Activated naive CD4-positive, alpha-beta T cell treated with anti-CD3 and anti-CD28 coated beads for 36 hours (primary cell): ENCODE measurements at regions of chr6 and their contacts with region 1.

Region 1: GRCh38 chr6:13711733-13712598 is at the start of gene RANBP9:
- DNase-seq: peak; percentile 86
- H3K4me3 Mint-ChIP-seq: peak within 1 kb of the TSS; percentile 87
- H3K27ac Mint-ChIP-seq: peak within 1 kb of the TSS; percentile 96
- H3K4me1 Mint-ChIP-seq: peaks cover 54% of the 10 kb centered on the region
- H3K27me3 Mint-ChIP-seq: no peaks in the 10 kb centered on the region
- total RNA-seq, gene RANBP9: 61.2 to 62.9 TPM

Region 2: DNA sequence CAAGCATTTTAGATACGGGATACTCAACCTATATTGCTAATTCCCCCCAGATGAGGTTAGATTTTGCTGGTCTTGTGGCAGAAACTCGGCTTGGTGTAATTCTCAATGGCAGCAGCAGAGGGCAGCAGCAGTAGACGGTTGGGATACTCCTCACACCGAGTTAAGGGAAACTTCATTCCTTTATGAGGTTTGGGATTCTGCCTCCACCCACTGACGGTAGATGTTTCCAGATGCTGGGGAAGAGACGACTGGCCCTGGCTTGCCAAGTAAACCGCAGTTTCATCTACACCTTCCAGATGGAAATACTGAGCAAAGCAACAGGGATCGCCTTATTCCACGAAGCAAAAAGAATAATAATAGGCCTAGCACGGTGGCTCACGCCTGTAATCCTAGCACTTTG is 375.4 kb before region 1 on chr6:
- CTCF ChIA-PET with region 1: no interaction called
- intact Hi-C with region 1: loop called (anchors 5 kb)
- DNase-seq: peak; percentile 82
- H3K4me3 Mint-ChIP-seq: no peak overlapping the region
- H3K27ac Mint-ChIP-seq: no peak overlapping the region
- H3K4me1 Mint-ChIP-seq: peaks cover 8% of the 10 kb centered on the region
- H3K27me3 Mint-ChIP-seq: no peaks in the 10 kb centered on the region

Region 3: GRCh38 chr6:13614926-13615798 is 96.8 kb before region 1 on chr6 and contains the start of gene NOL7:
- CTCF ChIA-PET with region 1: interaction called, 13 read pairs
- intact Hi-C with region 1: loop called (anchors 1 kb)
- DNase-seq: peak; percentile 99
- H3K4me3 Mint-ChIP-seq: peak within 1 kb of the TSS; percentile 99
- H3K27ac Mint-ChIP-seq: peak within 1 kb of the TSS; percentile 93
- H3K4me1 Mint-ChIP-seq: peaks cover 51% of the 10 kb centered on the region
- H3K27me3 Mint-ChIP-seq: no peaks in the 10 kb centered on the region
- total RNA-seq, gene NOL7: 79.5 to 80.8 TPM

Region 4: DNA sequence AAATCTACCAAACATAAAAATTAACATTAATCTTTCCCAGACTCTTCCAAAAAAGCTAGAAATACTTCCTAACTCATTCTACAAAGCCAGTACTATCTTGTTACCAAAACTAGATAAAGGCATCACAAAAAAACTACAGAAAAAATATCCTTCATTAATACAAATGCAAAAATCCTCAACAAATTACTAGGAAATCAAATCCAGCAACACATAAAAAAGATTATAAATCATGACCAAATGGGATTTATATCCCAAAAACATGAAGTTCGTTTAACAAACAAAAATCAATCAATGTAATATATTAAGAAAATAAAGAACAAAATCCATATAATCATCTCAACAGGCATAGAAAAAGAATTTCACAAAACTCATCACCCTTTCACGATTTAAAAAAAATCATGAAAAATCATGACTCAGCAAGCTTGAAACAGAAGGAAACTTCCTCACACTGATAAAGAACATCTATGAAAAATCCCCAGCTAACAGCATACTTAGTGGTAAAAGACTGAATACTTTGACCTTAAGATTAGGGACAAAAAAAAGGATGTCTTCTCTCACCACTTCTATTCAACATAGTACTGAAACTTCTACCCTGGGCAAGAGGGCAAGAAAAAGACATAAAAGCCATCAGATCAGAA is 43.6 kb before region 1 on chr6:
- CTCF ChIA-PET with region 1: no interaction called
- intact Hi-C with region 1: loop called (anchors 5 kb)
- DNase-seq: no peak
- H3K4me3 Mint-ChIP-seq: peak overlapping the region; percentile 5
- H3K27ac Mint-ChIP-seq: peak overlapping the region; percentile 86
- H3K4me1 Mint-ChIP-seq: peaks cover 90% of the 10 kb centered on the region
- H3K27me3 Mint-ChIP-seq: no peaks in the 10 kb centered on the region

Region 5: GRCh38 chr6:13725570-13725969 is 13.6 kb after region 1 on chr6:
- CTCF ChIA-PET with region 1: interaction called, 3 read pairs
- intact Hi-C with region 1: loop called (anchors 1 kb)
- DNase-seq: peak; percentile 62
- H3K4me3 Mint-ChIP-seq: no peak overlapping the region
- H3K27ac Mint-ChIP-seq: peak overlapping the region; percentile 80
- H3K4me1 Mint-ChIP-seq: peaks cover 38% of the 10 kb centered on the region
- H3K27me3 Mint-ChIP-seq: no peaks in the 10 kb centered on the region

Region 6: DNA sequence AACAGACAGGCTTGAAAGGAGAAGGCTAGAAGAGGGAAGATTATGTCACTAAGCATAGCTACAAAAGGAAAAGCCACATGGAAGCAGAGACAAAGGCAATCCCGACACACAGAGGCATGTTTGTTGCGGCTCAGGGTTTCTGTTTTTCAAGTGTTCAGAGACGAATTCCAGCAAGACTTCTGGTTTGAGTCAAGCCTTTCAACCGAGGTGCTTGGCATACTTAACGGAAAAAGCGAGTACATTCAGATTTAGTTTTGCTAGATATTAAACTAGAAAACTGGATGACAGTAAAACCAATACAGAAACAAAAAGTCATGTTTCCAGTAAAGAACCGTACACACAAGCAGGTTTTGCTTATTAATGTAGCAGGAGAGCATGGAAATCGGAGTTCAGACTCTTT is 75.2 kb after region 1 on chr6:
- CTCF ChIA-PET with region 1: no interaction called
- intact Hi-C with region 1: loop called (anchors 1 kb)
- DNase-seq: peak; percentile 75
- H3K4me3 Mint-ChIP-seq: peak overlapping the region; percentile 14
- H3K27ac Mint-ChIP-seq: peak overlapping the region; percentile 79
- H3K4me1 Mint-ChIP-seq: peaks cover 34% of the 10 kb centered on the region
- H3K27me3 Mint-ChIP-seq: no peaks in the 10 kb centered on the region

Region 7: DNA sequence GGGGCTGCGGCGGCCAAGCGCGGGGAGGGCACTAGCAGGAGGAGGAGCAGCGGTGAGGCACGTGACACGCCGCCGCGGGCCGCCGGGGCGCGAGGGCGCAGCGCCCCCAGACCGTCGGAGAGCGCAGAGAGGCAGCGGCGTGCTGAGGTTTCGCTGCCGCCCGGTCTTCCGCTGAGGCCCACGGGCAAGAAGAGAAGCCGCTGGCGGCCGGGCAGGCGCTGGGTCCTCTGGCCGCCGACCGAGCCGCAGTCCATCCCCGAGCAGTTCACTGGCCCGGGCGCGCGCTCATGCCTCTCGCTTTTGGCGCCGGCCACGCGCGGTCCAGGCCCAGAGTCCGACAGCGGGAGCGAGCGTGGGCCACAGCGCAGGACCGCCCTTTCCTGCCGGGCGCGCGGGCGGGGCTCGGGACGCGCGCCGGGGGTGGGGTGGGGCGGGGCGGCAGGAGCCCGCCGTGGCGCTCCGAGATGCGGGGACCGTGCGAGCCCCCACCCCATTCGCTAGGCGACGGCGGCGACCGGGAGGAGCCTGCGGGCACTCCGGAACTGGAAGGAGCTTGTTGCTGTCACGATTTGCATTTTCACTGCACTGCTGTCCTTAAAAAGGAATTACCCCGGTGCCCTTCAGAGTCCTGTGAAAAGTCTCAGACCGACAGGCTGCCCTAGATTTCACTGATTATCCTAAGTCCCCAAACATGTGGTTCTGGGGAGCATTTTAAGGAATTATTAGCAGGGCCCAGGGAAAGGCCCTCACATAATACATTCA is 102.4 kb after region 1 on chr6 and contains the start of gene MCUR1:
- CTCF ChIA-PET with region 1: no interaction called
- intact Hi-C with region 1: loop called (anchors 1 kb)
- DNase-seq: peak; percentile 85
- H3K4me3 Mint-ChIP-seq: peak within 1 kb of the TSS; percentile 83
- H3K27ac Mint-ChIP-seq: peak within 1 kb of the TSS; percentile 82
- H3K4me1 Mint-ChIP-seq: peaks cover 28% of the 10 kb centered on the region
- H3K27me3 Mint-ChIP-seq: no peaks in the 10 kb centered on the region
- total RNA-seq, gene MCUR1: 27.1 to 28.3 TPM